Activated T-helper 2 cell treated with anti-CD3 and anti-CD28 coated beads, Interferon-gamma antibody, Interleukin-2, Interleukin-4, amounts not matched to agents 10 μg/mL and 5 μg/mL and 100 μg/mL, durations not matched to agents 14 hours and 24 hours and 36 hours (primary cell): ENCODE measurements at regions of chr4 and their contacts with region 1.

Region 1: GRCh38 chr4:7101692-7102515 is 34.0 kb upstream of the GRPEL1 start:
- DNase-seq: peak; percentile 48
- H3K4me3 Mint-ChIP-seq: peak overlapping the region; percentile 94
- H3K27ac Mint-ChIP-seq: no peak overlapping the region
- H3K4me1 Mint-ChIP-seq: peaks cover 9% of the 10 kb centered on the region
- H3K27me3 Mint-ChIP-seq: peaks cover 20% of the 10 kb centered on the region

Region 2: DNA sequence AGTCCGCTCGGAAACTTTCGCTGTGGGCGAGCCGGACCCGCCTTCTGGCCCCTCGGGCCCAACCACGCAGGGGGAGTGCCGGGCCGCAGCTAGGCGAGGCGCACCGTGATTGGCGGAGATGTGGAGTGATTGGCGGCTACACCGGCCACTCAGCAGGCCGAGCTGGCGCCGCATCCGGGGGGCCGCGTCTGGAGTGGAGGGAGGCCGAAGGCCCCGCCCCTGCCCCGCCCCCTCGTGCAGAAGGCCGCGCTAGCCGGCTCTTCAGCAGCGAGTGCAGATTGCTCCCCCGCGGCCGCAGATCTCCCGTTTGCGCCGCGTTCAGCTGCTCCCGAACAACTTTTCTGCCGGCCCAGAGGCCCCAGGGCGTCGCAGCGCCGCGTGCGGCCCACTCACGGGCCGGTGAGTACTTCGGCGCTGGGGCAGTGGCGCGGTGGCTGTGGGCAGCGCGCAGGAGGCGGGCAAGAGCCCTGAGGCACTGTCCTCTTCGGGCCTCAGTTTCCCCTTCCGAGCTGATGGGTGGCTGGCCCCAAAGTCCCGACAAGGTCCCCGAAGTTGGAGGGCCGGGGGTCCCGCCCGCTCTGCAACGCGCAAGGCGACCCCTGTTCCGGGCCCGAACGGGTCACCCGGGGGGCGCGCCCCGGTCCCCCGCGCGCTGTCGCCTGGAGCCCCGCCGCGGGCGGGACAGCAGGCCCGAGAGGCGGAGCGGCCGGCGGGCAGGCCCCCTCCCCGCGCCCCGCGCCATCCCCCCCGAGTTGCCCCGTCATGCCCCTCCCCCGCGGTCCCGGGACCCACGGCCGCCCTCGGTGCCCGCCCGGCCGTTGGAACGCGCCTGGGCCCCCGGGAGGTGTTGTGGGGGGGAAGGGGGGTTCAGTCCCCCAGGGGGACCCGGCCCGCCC is 832.0 kb before region 1 on chr4 and contains the start of gene WFS1:
- intact Hi-C with region 1: loop called (anchors 10 kb)
- DNase-seq: peak; percentile 96
- H3K4me3 Mint-ChIP-seq: peak within 1 kb of the TSS; percentile 77
- H3K27ac Mint-ChIP-seq: no peak within 1 kb of the TSS
- H3K4me1 Mint-ChIP-seq: peaks cover 17% of the 10 kb centered on the region
- H3K27me3 Mint-ChIP-seq: peaks cover 37% of the 10 kb centered on the region
- total RNA-seq, gene WFS1: 4.4 and 5.9 TPM in 2 replicates

Region 3: GRCh38 chr4:7031526-7032449 is 70.1 kb before region 1 on chr4:
- intact Hi-C with region 1: no loop called
- DNase-seq: no peak
- H3K4me3 Mint-ChIP-seq: no peak overlapping the region
- H3K27ac Mint-ChIP-seq: no peak overlapping the region
- H3K4me1 Mint-ChIP-seq: peaks cover 2% of the 10 kb centered on the region
- H3K27me3 Mint-ChIP-seq: no peaks in the 10 kb centered on the region

Region 4: DNA sequence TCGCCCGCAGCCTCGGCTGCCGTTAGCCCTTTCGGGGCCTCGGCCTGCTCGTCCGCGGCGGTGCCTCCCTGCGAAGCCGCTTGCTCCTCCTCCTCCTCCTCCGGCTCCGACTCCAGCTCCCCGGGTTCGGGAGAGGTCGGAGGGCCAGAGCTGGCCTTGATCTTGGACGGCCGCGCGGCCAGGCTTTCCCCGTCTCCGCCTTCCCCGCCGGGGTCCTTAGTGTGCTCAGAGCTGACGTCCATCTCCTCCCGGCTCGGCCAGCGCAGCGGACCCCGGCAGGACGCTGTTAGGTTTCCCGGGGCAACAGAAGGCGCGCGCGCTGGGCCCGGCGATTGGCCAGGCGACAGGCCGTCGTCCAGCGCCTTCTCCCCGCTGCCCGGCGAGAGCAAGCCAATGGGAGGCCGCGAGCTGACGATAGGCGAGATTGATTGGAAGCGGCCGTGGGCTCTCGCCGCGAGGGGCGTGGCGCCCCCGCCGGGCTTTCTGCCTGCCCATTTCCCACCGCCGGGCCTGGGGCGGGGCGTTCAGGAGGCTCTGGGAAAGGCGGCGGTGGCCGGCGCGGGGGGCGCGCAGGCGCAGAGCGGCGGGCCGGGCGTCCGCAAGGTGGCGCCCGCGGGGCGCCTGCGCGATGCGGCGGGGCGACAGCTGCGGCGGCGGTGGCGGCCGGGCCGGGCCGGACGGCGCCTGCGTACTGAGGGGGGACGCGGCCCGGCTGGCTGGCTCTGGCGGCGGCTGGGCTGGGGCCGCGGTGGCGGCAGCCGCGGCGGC is 59.0 kb before region 1 on chr4 and contains the start of gene TADA2B:
- intact Hi-C with region 1: loop called (anchors 2 kb)
- DNase-seq: peak; percentile 94
- H3K4me3 Mint-ChIP-seq: peak within 1 kb of the TSS; percentile 86
- H3K27ac Mint-ChIP-seq: peak within 1 kb of the TSS; percentile 65
- H3K4me1 Mint-ChIP-seq: peaks cover 38% of the 10 kb centered on the region
- H3K27me3 Mint-ChIP-seq: peaks cover 7% of the 10 kb centered on the region
- total RNA-seq, gene TADA2B: 12.9 and 13.3 TPM in 2 replicates

Region 5: DNA sequence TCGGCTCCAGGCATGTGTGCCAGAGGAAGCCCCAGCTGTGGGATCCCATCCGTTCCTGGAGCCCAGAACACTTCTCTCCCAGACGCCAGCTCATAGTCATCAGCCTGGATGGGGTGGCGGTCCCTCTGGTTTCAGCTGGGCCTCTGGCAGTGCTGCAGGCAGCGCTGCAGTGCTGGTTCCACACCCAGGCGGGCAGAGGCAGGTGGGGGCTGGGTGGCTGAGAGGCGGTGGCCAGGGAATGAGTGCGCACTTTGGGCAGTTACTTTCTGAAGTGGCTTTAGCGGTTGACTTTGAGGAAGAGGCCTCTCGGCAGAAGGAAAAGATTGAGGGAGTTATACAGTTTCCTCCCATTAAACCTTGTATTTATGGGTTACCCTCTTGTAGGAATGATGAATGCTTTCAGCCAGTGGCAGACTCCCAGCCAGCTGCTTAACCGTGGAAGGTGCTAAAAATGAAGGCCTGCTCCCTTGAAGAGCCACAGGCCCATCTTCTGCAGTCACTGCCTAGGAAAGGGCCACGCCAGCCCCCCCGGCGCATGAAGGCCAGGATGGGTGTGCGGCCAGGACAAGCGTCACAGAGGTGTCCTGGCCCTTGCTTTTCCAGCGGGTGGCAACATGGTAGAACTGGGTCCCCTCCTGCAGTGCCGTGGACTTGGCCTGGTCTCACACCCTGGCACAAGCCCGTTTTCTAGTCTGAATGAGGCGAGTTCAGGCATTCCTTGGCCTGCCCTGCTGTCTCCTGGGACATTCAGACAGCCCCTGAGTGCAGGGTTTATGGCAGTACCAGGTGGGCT is 48.8 kb before region 1 on chr4:
- intact Hi-C with region 1: no loop called
- DNase-seq: no peak
- H3K4me3 Mint-ChIP-seq: no peak overlapping the region
- H3K27ac Mint-ChIP-seq: peak overlapping the region; percentile 38
- H3K4me1 Mint-ChIP-seq: peaks cover 7% of the 10 kb centered on the region
- H3K27me3 Mint-ChIP-seq: no peaks in the 10 kb centered on the region